PC-9 (cell line): ENCODE measurements at regions of chr11 and their contacts with region 1.

Region 1: GRCh38 chr11:64846998-64847666 is 2.7 kb upstream of the CDC42BPG start:
- DNase-seq: peak; percentile 83 to 95
- H3K4me3 ChIP-seq: no peak overlapping the region
- H3K27ac ChIP-seq: no peak overlapping the region
- H3K4me1 ChIP-seq: peaks cover 70% of the 10 kb centered on the region
- H3K27me3 ChIP-seq: no peaks in the 10 kb centered on the region
- CTCF ChIP-seq: peak; percentile 98

Region 2: GRCh38 chr11:64742889-64743590 is 104.1 kb before region 1 on chr11:
- CTCF ChIA-PET with region 1: no interaction called
- POLR2A ChIA-PET with region 1: no interaction called
- intact Hi-C with region 1: no loop called
- DNase-seq: peak in 1 of 2 experiments; percentile 83
- H3K4me3 ChIP-seq: peak overlapping the region; percentile 64
- H3K27ac ChIP-seq: no peak overlapping the region
- H3K4me1 ChIP-seq: peaks cover 13% of the 10 kb centered on the region
- H3K27me3 ChIP-seq: peaks cover 51% of the 10 kb centered on the region
- CTCF ChIP-seq: peak; percentile 93

Region 3: GRCh38 chr11:64787526-64788320 is 59.4 kb before region 1 on chr11:
- CTCF ChIA-PET with region 1: interaction called, 4 read pairs
- POLR2A ChIA-PET with region 1: no interaction called
- intact Hi-C with region 1: loop called (anchors 1 kb)
- DNase-seq: peak; percentile 43 to 62
- H3K4me3 ChIP-seq: no peak overlapping the region
- H3K27ac ChIP-seq: no peak overlapping the region
- H3K4me1 ChIP-seq: no peaks in the 10 kb centered on the region
- H3K27me3 ChIP-seq: no peaks in the 10 kb centered on the region
- CTCF ChIP-seq: peak; percentile 81

Region 4: GRCh38 chr11:64878494-64879243 is 31.5 kb after region 1 on chr11 and contains the start of gene EHD1:
- CTCF ChIA-PET with region 1: interaction called, 23 read pairs
- POLR2A ChIA-PET with region 1: interaction called, 15 read pairs
- intact Hi-C with region 1: loop called (anchors 5 kb)
- DNase-seq: peak; percentile 92 to 99
- H3K4me3 ChIP-seq: peak within 1 kb of the TSS; percentile 98
- H3K27ac ChIP-seq: peak within 1 kb of the TSS; percentile 80
- H3K4me1 ChIP-seq: peaks cover 28% of the 10 kb centered on the region
- H3K27me3 ChIP-seq: no peaks in the 10 kb centered on the region
- CTCF ChIP-seq: peak; percentile 39
- total RNA-seq, gene EHD1: 110 and 134 TPM in 2 replicates

Region 5: DNA sequence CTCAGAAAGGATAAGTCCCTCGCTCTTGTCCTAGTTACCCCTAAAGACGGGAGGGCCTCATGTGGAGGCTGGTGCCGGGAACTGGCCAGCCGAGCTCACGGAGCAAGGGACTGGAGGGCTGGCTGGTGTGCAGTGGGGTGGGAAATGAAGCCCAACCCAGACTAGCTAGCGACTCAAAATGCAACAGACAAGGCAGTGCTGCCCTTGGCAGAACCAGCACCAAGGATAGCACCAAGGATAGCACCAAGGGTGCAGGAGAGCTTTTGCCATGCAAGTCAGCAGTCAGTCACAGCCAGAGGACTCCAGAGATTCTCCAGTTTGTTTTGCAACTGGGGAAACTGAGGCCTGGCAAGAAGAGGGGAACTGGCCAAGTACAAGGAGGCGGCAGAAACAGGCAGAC is 156.2 kb after region 1 on chr11:
- CTCF ChIA-PET with region 1: no interaction called
- POLR2A ChIA-PET with region 1: interaction called, 4 read pairs
- intact Hi-C with region 1: loop called (anchors 2 kb)
- DNase-seq: no peak
- H3K4me3 ChIP-seq: no peak overlapping the region
- H3K27ac ChIP-seq: no peak overlapping the region
- H3K4me1 ChIP-seq: peaks cover 18% of the 10 kb centered on the region
- H3K27me3 ChIP-seq: no peaks in the 10 kb centered on the region
- CTCF ChIP-seq: no peak

Region 6: GRCh38 chr11:65117216-65118096 is 270.3 kb after region 1 on chr11 and contains the start of gene ZNHIT2:
- CTCF ChIA-PET with region 1: no interaction called
- POLR2A ChIA-PET with region 1: interaction called, 21 read pairs
- intact Hi-C with region 1: loop called (anchors 2 kb)
- DNase-seq: peak; percentile 96 to 100
- H3K4me3 ChIP-seq: peak within 1 kb of the TSS; percentile 100
- H3K27ac ChIP-seq: peak within 1 kb of the TSS; percentile 86
- H3K4me1 ChIP-seq: peaks cover 38% of the 10 kb centered on the region
- H3K27me3 ChIP-seq: no peaks in the 10 kb centered on the region
- CTCF ChIP-seq: peak; percentile 98
- total RNA-seq, gene ZNHIT2: 13.7 and 22.3 TPM in 2 replicates

Region 7: GRCh38 chr11:65711785-65712632 is 864.9 kb after region 1 on chr11 and contains the start of gene KAT5:
- CTCF ChIA-PET with region 1: no interaction called
- POLR2A ChIA-PET with region 1: interaction called, 25 read pairs
- intact Hi-C with region 1: no loop called
- DNase-seq: peak; percentile 96 to 99
- H3K4me3 ChIP-seq: peak within 1 kb of the TSS; percentile 86
- H3K27ac ChIP-seq: peak within 1 kb of the TSS; percentile 91
- H3K4me1 ChIP-seq: peaks cover 13% of the 10 kb centered on the region
- H3K27me3 ChIP-seq: no peaks in the 10 kb centered on the region
- CTCF ChIP-seq: peak; percentile 97
- total RNA-seq, gene KAT5: 49.6 and 57.1 TPM in 2 replicates